Testis (tissue), 5 donors: ENCODE measurements at regions of chr16 and their contacts with region 1.

Region 1: GRCh38 chr16:67917852-67918236 is 13.8 kb downstream of the CTRL start:
- DNase-seq: no peak
- H3K4me3 ChIP-seq: no peak overlapping the region
- H3K27ac ChIP-seq: no peak overlapping the region
- H3K4me1 ChIP-seq: peaks cover 13% of the 10 kb centered on the region
- H3K27me3 ChIP-seq: no peaks in the 10 kb centered on the region
- CTCF ChIP-seq: no peak
- POLR2A ChIP-seq: no peak

Region 2: GRCh38 chr16:67760206-67760955 is 157.5 kb before region 1 on chr16:
- intact Hi-C with region 1: no loop called
- DNase-seq: no peak
- H3K4me3 ChIP-seq: no peak overlapping the region
- H3K27ac ChIP-seq: no peak overlapping the region
- H3K4me1 ChIP-seq: no peaks in the 10 kb centered on the region
- H3K27me3 ChIP-seq: no peaks in the 10 kb centered on the region
- CTCF ChIP-seq: no peak
- POLR2A ChIP-seq: no peak

Region 3: DNA sequence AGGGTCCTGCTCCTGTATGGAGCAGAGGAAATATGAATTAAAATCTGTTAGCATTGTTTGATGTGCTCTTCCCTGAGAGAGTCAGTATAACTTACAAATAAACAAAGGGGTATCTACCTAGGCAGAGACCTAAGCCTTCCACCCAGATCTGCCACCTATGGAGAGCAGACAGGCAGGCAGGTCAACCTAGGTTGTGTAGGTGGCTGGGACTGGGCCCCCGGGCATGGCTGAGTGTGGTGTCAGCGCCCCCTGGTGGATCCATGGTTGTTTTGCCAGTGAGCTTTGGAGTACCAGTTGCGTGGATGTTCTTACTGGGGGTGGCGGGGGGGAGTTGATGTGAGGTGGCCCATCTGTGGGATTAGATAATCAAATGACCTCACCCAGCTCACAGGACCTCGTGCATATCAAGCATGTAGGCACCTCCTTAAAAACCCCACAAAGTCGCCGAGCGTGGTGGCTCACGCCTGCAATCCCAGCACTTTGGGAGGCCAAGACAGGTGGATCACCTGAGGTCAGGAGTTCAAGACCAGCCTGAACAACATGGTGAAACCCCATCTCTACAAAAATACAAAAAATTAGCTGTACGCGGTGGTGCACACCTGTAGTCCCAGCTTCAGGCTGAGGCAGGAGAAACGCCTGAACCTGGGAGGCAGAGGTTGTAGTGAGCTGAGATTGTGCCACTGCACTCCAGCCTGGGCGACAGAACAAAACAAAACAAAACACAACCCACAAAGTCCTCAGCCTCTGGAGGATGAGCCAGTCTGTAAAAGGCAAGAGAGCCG is 122.9 kb after region 1 on chr16:
- intact Hi-C with region 1: loop called (anchors 10 kb)
- DNase-seq: peak; percentile 92
- H3K4me3 ChIP-seq: no peak overlapping the region
- H3K27ac ChIP-seq: no peak overlapping the region
- H3K4me1 ChIP-seq: peaks cover 3% of the 10 kb centered on the region
- H3K27me3 ChIP-seq: no peaks in the 10 kb centered on the region
- CTCF ChIP-seq: peak; percentile 83 to 90 (median 90)
- POLR2A ChIP-seq: no peak

Region 4: GRCh38 chr16:68247400-68247799 is 329.6 kb after region 1 on chr16:
- intact Hi-C with region 1: no loop called
- DNase-seq: no peak
- H3K4me3 ChIP-seq: no peak overlapping the region
- H3K27ac ChIP-seq: no peak overlapping the region
- H3K4me1 ChIP-seq: peaks cover 15% of the 10 kb centered on the region
- H3K27me3 ChIP-seq: no peaks in the 10 kb centered on the region
- CTCF ChIP-seq: no peak
- POLR2A ChIP-seq: no peak